Activated CD4-positive, alpha-beta T cell treated with anti-CD3 and anti-CD28 coated beads for 36 hours (primary cell): ENCODE measurements at regions of chr14 and their contacts with region 1.

Region 1: GRCh38 chr14:106134886-106135285 is 608.5 kb downstream of the TMEM121 start:
- DNase-seq: no peak
- ATAC-seq: no peak
- H3K4me3 Mint-ChIP-seq: no peak overlapping the region
- H3K27ac Mint-ChIP-seq: no peak overlapping the region
- H3K4me1 Mint-ChIP-seq: peaks cover 28% of the 10 kb centered on the region
- H3K27me3 Mint-ChIP-seq: peaks cover 2% of the 10 kb centered on the region

Region 2: GRCh38 chr14:106766145-106766544 is 631.3 kb after region 1 on chr14:
- CTCF ChIA-PET with region 1: no interaction called
- POLR2A ChIA-PET with region 1: no interaction called
- intact Hi-C with region 1: loop called in 1 of 2 experiments (anchors 10 kb)
- DNase-seq: no peak
- ATAC-seq: no peak
- H3K4me3 Mint-ChIP-seq: no peak overlapping the region
- H3K27ac Mint-ChIP-seq: peak overlapping the region; percentile 29
- H3K4me1 Mint-ChIP-seq: peaks cover 32% of the 10 kb centered on the region
- H3K27me3 Mint-ChIP-seq: no peaks in the 10 kb centered on the region